ENCODE measurements at regions of chr3 and their contacts with region 1.

Region 1: GRCh38 chr3:120795017-120795648 is 52.6 kb downstream of the GTF2E1 start:
- DNase-seq: peak; percentile 52 to 89 (median 80)
- ATAC-seq: peak; percentile 85 to 98 (median 94)
- H3K4me3 ChIP-seq: no peak overlapping the region
- H3K4me3 Mint-ChIP-seq: no peak overlapping the region
- H3K27ac ChIP-seq: no peak overlapping the region
- H3K27ac Mint-ChIP-seq: no peak overlapping the region
- H3K4me1 ChIP-seq: peaks cover 0 to 2% of the 10 kb centered on the region in 2 experiments
- H3K4me1 Mint-ChIP-seq: peaks cover 11 to 14% (median 11%) of the 10 kb centered on the region in 3 donors
- H3K27me3 ChIP-seq: peaks cover 0 to 3% of the 10 kb centered on the region in 2 experiments
- H3K27me3 Mint-ChIP-seq: peaks cover 0 to 4% of the 10 kb centered on the region in 2 donors

Region 2: GRCh38 chr3:120417272-120417911 is 377.7 kb before region 1 on chr3:
- CTCF ChIA-PET with region 1: interaction called, 6 to 10 read pairs
- POLR2A ChIA-PET with region 1: no interaction called
- DNase-seq: peak; percentile 54 to 89 (median 72)
- ATAC-seq: peak; percentile 98
- H3K4me3 ChIP-seq: peak overlapping the region; percentile 39 to 46
- H3K4me3 Mint-ChIP-seq: peak overlapping the region; percentile 67 to 83 (median 81)
- H3K27ac ChIP-seq: no peak overlapping the region
- H3K27ac Mint-ChIP-seq: peak overlapping the region in 1 of 2 donors; percentile 9
- H3K4me1 ChIP-seq: peaks cover 9 to 17% of the 10 kb centered on the region in 2 experiments
- H3K4me1 Mint-ChIP-seq: peaks cover 11 to 19% (median 16%) of the 10 kb centered on the region in 3 donors
- H3K27me3 ChIP-seq: peaks cover 0 to 13% of the 10 kb centered on the region in 2 experiments
- H3K27me3 Mint-ChIP-seq: peaks cover 0 to 5% of the 10 kb centered on the region in 2 donors

Region 3: DNA sequence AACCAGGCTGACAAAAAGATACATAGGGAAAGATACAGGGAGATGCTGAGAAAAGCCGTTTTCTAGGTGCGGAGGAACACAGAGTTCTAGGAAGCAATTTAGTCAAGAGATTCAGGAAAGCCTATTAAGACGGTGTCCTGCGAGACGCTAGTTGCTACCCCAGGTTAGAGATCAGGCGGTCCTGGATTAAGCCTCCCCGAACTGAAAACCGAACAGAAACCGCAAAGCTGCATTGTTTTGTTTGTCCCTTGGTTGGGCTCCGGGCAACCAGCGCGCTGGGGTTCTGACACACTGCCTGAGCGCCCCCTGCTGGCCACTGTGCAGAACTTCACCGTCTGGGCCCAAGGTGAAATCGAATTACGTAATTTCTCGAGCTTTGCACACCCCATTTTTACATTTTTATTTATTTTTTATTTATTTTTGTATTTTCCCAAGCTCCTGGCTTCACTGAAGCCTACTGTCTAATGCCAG is 236.3 kb before region 1 on chr3:
- CTCF ChIA-PET with region 1: interaction called, 29 to 35 read pairs
- POLR2A ChIA-PET with region 1: interaction called in 1 of 2 experiments, 7 read pairs
- DNase-seq: peak; percentile 72 to 93 (median 86)
- ATAC-seq: peak; percentile 82 to 90 (median 86)
- H3K4me3 ChIP-seq: peak overlapping the region; percentile 48 to 63
- H3K4me3 Mint-ChIP-seq: peak overlapping the region; percentile 70 to 76 (median 74)
- H3K27ac ChIP-seq: no peak overlapping the region
- H3K27ac Mint-ChIP-seq: peak overlapping the region in 1 of 2 donors; percentile 46
- H3K4me1 ChIP-seq: peaks cover 5 to 16% of the 10 kb centered on the region in 2 experiments
- H3K4me1 Mint-ChIP-seq: peaks cover 16 to 25% (median 18%) of the 10 kb centered on the region in 3 donors
- H3K27me3 ChIP-seq: peaks cover 0 to 18% of the 10 kb centered on the region in 2 experiments
- H3K27me3 Mint-ChIP-seq: peaks cover 4 to 11% of the 10 kb centered on the region in 2 donors

Region 4: GRCh38 chr3:120567370-120568201 is 227.5 kb before region 1 on chr3:
- CTCF ChIA-PET with region 1: interaction called, 20 to 28 read pairs
- POLR2A ChIA-PET with region 1: no interaction called
- DNase-seq: peak in 1 of 35 experiments; percentile 37
- ATAC-seq: peak in 3 of 4 experiments; percentile 54 to 82 (median 65)
- H3K4me3 ChIP-seq: no peak overlapping the region
- H3K4me3 Mint-ChIP-seq: peak overlapping the region in 1 of 3 donors; percentile 7
- H3K27ac ChIP-seq: no peak overlapping the region
- H3K27ac Mint-ChIP-seq: peak overlapping the region in 1 of 2 donors; percentile 48
- H3K4me1 ChIP-seq: no peaks in the 10 kb centered on the region
- H3K4me1 Mint-ChIP-seq: peaks cover 0 to 3% (median 2%) of the 10 kb centered on the region in 3 donors
- H3K27me3 ChIP-seq: peaks cover 0 to 12% of the 10 kb centered on the region in 2 experiments
- H3K27me3 Mint-ChIP-seq: peaks cover 8 to 11% of the 10 kb centered on the region in 2 donors

Region 5: GRCh38 chr3:120742198-120742849 is 52.8 kb before region 1 on chr3 and contains the starts of genes GTF2E1 and RABL3:
- CTCF ChIA-PET with region 1: interaction called in 1 of 2 experiments, 12 read pairs
- POLR2A ChIA-PET with region 1: interaction called in 1 of 2 experiments, 6 read pairs
- DNase-seq: peak; percentile 91 to 99 (median 97)
- ATAC-seq: peak; percentile 95 to 98 (median 98)
- H3K4me3 ChIP-seq: peak within 1 kb of the TSS; percentile 65 to 95
- H3K4me3 Mint-ChIP-seq: peak within 1 kb of the TSS; percentile 87 to 95 (median 94)
- H3K27ac ChIP-seq: peak within 1 kb of the TSS; percentile 99
- H3K27ac Mint-ChIP-seq: peak within 1 kb of the TSS; percentile 93 to 98
- H3K4me1 ChIP-seq: peaks cover 12 to 30% of the 10 kb centered on the region in 2 experiments
- H3K4me1 Mint-ChIP-seq: peaks cover 37 to 49% (median 47%) of the 10 kb centered on the region in 3 donors
- H3K27me3 ChIP-seq: no peaks in the 10 kb centered on the region
- H3K27me3 Mint-ChIP-seq: no peaks in the 10 kb centered on the region
- total RNA-seq, gene GTF2E1: 13.3 to 28.5 (median 26.0) TPM
- total RNA-seq, gene RABL3: 14.7 to 31.8 (median 25.0) TPM

Region 6: GRCh38 chr3:120778776-120779175 is 16.4 kb before region 1 on chr3:
- CTCF ChIA-PET with region 1: interaction called, 5 to 18 read pairs
- POLR2A ChIA-PET with region 1: no interaction called
- DNase-seq: no peak
- ATAC-seq: no peak
- H3K4me3 ChIP-seq: no peak overlapping the region
- H3K4me3 Mint-ChIP-seq: no peak overlapping the region
- H3K27ac ChIP-seq: no peak overlapping the region
- H3K27ac Mint-ChIP-seq: peak overlapping the region in 1 of 2 donors; percentile 35
- H3K4me1 ChIP-seq: no peaks in the 10 kb centered on the region
- H3K4me1 Mint-ChIP-seq: peaks cover 0 to 7% (median 0%) of the 10 kb centered on the region in 3 donors
- H3K27me3 ChIP-seq: no peaks in the 10 kb centered on the region
- H3K27me3 Mint-ChIP-seq: no peaks in the 10 kb centered on the region